ENCODE measurements at regions of chr14 and their contacts with region 1.

Region 1: GRCh38 chr14:74296037-74296467 is 6.7 kb downstream of the ABCD4 start:
- DNase-seq: no peak
- H3K4me3 ChIP-seq: no peak overlapping the region
- H3K27ac ChIP-seq: no peak overlapping the region
- H3K4me1 ChIP-seq: 0 out of 7 replicates have a peak, but pooled peaks cover 0 to 2% (median 0%) of the 10 kb centered on the region in 4 experiments
- H3K27me3 ChIP-seq: no peaks in the 10 kb centered on the region
- CTCF ChIP-seq: no peak
- EP300 ChIP-seq: no peak
- POLR2A ChIP-seq: no peak
- RAD21 ChIP-seq: no peak

Region 2: GRCh38 chr14:74109369-74109768 is 186.7 kb before region 1 on chr14:
- CTCF ChIA-PET with region 1: interaction called, 15 read pairs
- POLR2A ChIA-PET with region 1: no interaction called
- DNase-seq: no peak
- H3K4me3 ChIP-seq: no peak overlapping the region
- H3K27ac ChIP-seq: no peak overlapping the region
- H3K4me1 ChIP-seq: no peaks in the 10 kb centered on the region
- H3K27me3 ChIP-seq: no peaks in the 10 kb centered on the region
- CTCF ChIP-seq: no peak
- EP300 ChIP-seq: no peak
- POLR2A ChIP-seq: no peak
- RAD21 ChIP-seq: no peak

Region 3: GRCh38 chr14:74240794-74241651 is 55.0 kb before region 1 on chr14:
- CTCF ChIA-PET with region 1: interaction called, 19 read pairs
- POLR2A ChIA-PET with region 1: no interaction called
- DNase-seq: peak in 1 of 2 experiments; percentile 81
- H3K4me3 ChIP-seq: peak overlapping the region; percentile 21 to 55 (median 38); a peak in 7 of 8 replicates
- H3K27ac ChIP-seq: no peak overlapping the region
- H3K4me1 ChIP-seq: peaks cover 6 to 35% (median 15%) of the 10 kb centered on the region in 4 experiments
- H3K27me3 ChIP-seq: peaks cover 59 to 83% (median 75%) of the 10 kb centered on the region in 4 experiments
- CTCF ChIP-seq: no peak
- EP300 ChIP-seq: no peak
- POLR2A ChIP-seq: no peak
- RAD21 ChIP-seq: no peak

Region 4: GRCh38 chr14:74267588-74267987 is 28.5 kb before region 1 on chr14:
- CTCF ChIA-PET with region 1: interaction called, 36 read pairs
- POLR2A ChIA-PET with region 1: interaction called, 3 read pairs
- DNase-seq: no peak
- H3K4me3 ChIP-seq: no peak overlapping the region
- H3K27ac ChIP-seq: no peak overlapping the region
- H3K4me1 ChIP-seq: peaks cover 0 to 3% (median 1%) of the 10 kb centered on the region in 4 experiments; a peak in 2 of 7 replicates
- H3K27me3 ChIP-seq: no peaks in the 10 kb centered on the region; a peak in 1 of 7 replicates
- CTCF ChIP-seq: no peak
- EP300 ChIP-seq: no peak
- POLR2A ChIP-seq: no peak
- RAD21 ChIP-seq: no peak

Region 5: GRCh38 chr14:74401504-74402241 is 105.6 kb after region 1 on chr14:
- CTCF ChIA-PET with region 1: interaction called, 11 read pairs
- POLR2A ChIA-PET with region 1: no interaction called
- DNase-seq: peak in 1 of 2 experiments; percentile 76
- H3K4me3 ChIP-seq: no peak overlapping the region
- H3K27ac ChIP-seq: no peak overlapping the region
- H3K4me1 ChIP-seq: peaks cover 3 to 34% (median 25%) of the 10 kb centered on the region in 4 experiments
- H3K27me3 ChIP-seq: no peaks in the 10 kb centered on the region
- CTCF ChIP-seq: no peak
- EP300 ChIP-seq: no peak
- POLR2A ChIP-seq: no peak
- RAD21 ChIP-seq: no peak

Region 6: DNA sequence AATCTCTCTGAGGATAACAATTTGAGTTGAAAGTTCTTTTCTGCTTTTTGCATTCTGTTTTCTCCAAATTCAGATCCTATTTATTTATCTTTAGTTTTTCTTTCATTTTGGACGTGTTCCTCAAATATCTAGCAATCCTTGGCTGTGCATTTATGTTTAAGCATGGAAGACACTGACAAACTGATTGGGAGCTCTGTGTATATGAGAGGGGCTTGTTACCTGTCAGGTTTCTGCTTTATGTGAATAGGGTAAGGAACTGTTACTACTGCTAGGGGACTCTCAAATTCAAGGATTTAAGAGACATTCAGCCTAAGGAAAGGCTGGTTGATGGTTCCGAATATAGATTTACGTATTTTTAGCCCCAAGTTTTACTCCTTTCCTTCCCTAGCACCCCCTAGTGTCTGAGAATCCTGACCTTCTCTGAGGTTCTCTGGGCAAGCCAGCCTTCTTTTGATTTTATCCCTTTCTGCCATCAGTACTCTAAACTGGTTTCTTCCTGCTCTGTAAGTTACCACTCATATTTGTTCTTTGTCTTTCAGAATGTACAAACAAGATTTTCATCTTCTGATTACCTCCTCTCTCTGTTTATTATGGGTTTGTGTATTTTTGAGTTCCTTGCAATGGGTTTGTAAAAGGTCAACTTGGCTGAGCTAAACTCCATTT is 497.6 kb after region 1 on chr14:
- CTCF ChIA-PET with region 1: no interaction called
- POLR2A ChIA-PET with region 1: no interaction called
- DNase-seq: no peak
- H3K4me3 ChIP-seq: no peak overlapping the region
- H3K27ac ChIP-seq: no peak overlapping the region
- H3K4me1 ChIP-seq: peaks cover 0 to 14% (median 0%) of the 10 kb centered on the region in 4 experiments; a peak in 1 of 7 replicates
- H3K27me3 ChIP-seq: no peaks in the 10 kb centered on the region
- CTCF ChIP-seq: peak in 2 of 3 experiments; percentile 40 to 51; a peak in 3 of 4 replicates
- EP300 ChIP-seq: no peak
- POLR2A ChIP-seq: no peak
- RAD21 ChIP-seq: no peak; a peak in 1 of 4 replicates